ENCODE measurements at regions of chr1 and their contacts with region 1.

Region 1: DNA sequence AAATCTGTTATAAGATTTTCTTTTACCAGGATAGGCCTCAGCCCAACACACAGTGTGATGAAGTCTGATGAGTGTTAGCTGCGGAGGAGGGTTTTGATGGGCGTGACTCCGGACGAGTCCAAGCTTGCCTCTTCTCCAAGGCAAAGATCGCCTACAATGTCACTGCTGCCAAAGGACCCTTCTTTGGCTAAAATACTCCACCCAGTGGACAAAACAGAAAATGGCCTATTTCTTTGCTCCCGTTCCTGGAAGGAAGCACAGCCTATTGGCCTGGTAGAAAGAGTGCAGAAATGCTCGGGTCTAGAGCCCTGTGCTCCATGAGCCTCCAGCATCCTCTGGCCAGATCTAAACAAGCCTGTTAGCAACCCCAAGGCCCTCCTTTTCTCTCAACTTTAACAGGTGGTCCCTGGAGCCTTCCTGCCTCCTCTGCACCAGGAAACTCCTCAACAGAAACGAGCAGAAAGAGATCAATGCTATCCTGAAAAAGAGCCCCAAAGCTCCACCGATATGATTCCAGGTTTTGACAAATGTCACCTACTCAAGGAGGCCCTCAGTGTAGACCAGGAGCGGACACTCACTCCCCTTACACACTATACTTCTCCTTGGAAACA is 3.4 kb upstream of the CASQ2 start:
- DNase-seq: peak; percentile 12
- H3K4me3 Mint-ChIP-seq: no peak overlapping the region
- H3K27ac Mint-ChIP-seq: no peak overlapping the region
- H3K4me1 Mint-ChIP-seq: no peaks in the 10 kb centered on the region
- H3K27me3 Mint-ChIP-seq: peaks cover 9% of the 10 kb centered on the region

Region 2: DNA sequence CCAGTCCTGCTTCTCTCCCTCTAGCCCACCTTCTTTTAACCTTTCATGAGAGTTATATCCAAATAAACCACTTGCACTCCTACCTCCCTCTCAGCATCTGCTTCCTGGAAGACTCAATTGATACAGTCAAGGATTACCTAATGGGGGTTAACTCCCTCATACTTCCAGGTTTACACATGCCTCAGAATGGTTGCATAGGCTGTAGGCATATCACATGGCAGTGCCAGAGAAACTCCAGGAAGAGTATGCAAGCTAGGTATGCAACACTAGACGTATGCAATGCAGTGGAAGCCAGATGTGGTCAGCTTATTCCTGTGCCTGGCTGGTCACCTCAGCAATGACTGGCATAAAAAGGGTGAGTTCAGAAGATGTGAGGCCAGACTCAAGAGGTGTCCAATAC is 162.9 kb before region 1 on chr1:
- CTCF ChIA-PET with region 1: interaction called, 3 read pairs
- intact Hi-C with region 1: loop called (anchors 1 kb)
- DNase-seq: no peak
- H3K4me3 Mint-ChIP-seq: no peak overlapping the region
- H3K27ac Mint-ChIP-seq: no peak overlapping the region
- H3K4me1 Mint-ChIP-seq: no peaks in the 10 kb centered on the region
- H3K27me3 Mint-ChIP-seq: peaks cover 12% of the 10 kb centered on the region